K562 (cell line): ENCODE measurements at regions of chr7 and their contacts with region 1.

Region 1: DNA sequence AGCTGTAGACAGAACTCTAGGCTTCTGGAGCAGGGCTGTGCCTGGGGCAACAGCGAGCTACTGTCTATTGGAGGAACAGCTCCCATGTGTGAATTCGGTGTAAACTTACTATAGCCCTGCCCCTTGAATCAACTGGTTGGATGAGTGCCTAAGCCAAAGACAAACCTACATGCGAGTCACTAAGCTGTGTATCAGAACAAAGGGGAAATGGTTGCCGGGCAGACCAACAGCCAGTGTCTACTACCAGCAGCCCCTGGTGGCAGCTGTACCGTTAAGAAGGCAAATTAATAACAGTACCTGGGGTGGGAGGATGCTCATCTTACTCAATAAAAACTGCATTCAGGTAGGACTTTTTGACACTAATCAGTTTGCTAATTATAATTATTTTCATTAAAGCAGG is 343.7 kb downstream of the ACTR3B start:
- DNase-seq: no peak
- ATAC-seq: no peak
- H3K4me3 ChIP-seq: no peak overlapping the region
- H3K27ac ChIP-seq: no peak overlapping the region
- H3K4me1 ChIP-seq: no peaks in the 10 kb centered on the region
- H3K27me3 ChIP-seq: peaks cover 0 to 16% of the 10 kb centered on the region in 2 experiments; a peak in 2 of 5 replicates
- CTCF ChIP-seq: no peak
- EP300 ChIP-seq: no peak
- POLR2A ChIP-seq: no peak
- RAD21 ChIP-seq: no peak

Region 2: GRCh38 chr7:152553671-152554317 is 549.4 kb before region 1 on chr7:
- CTCF ChIA-PET with region 1: no interaction called
- POLR2A ChIA-PET with region 1: no interaction called
- in situ Hi-C with region 1: no loop called
- intact Hi-C with region 1: no loop called
- DNase-seq: peak; percentile 61 to 73 (median 64)
- ATAC-seq: peak; percentile 73
- H3K4me3 ChIP-seq: peak overlapping the region; percentile 15
- H3K27ac ChIP-seq: peak overlapping the region; percentile 47; the same call in 2 of the 3 replicates
- H3K4me1 ChIP-seq: no peaks in the 10 kb centered on the region; a peak in 1 of 5 replicates
- H3K27me3 ChIP-seq: peaks cover 2 to 8% of the 10 kb centered on the region in 2 experiments; a peak in 2 of 5 replicates
- CTCF ChIP-seq: peak; percentile 18 to 48 (median 22); a peak in 3 of 6 replicates
- EP300 ChIP-seq: no peak
- POLR2A ChIP-seq: no peak
- RAD21 ChIP-seq: peak in 1 of 2 experiments; percentile 7; a peak in 1 of 4 replicates

Region 3: GRCh38 chr7:152894273-152895170 is 208.7 kb before region 1 on chr7:
- CTCF ChIA-PET with region 1: no interaction called
- POLR2A ChIA-PET with region 1: no interaction called
- in situ Hi-C with region 1: no loop called
- intact Hi-C with region 1: loop called (anchors 10 kb)
- DNase-seq: peak; percentile 69 to 94 (median 90)
- ATAC-seq: peak; percentile 97
- H3K4me3 ChIP-seq: no peak overlapping the region
- H3K27ac ChIP-seq: no peak overlapping the region
- H3K4me1 ChIP-seq: peaks cover 0 to 14% of the 10 kb centered on the region in 2 experiments; a peak in 1 of 5 replicates
- H3K27me3 ChIP-seq: peaks cover 42 to 66% of the 10 kb centered on the region in 2 experiments
- CTCF ChIP-seq: peak; percentile 87 to 93 (median 91)
- EP300 ChIP-seq: no peak
- POLR2A ChIP-seq: no peak
- RAD21 ChIP-seq: peak; percentile 88 to 94